ENCODE measurements at regions of chr1 and their contacts with region 1.

Region 1: DNA sequence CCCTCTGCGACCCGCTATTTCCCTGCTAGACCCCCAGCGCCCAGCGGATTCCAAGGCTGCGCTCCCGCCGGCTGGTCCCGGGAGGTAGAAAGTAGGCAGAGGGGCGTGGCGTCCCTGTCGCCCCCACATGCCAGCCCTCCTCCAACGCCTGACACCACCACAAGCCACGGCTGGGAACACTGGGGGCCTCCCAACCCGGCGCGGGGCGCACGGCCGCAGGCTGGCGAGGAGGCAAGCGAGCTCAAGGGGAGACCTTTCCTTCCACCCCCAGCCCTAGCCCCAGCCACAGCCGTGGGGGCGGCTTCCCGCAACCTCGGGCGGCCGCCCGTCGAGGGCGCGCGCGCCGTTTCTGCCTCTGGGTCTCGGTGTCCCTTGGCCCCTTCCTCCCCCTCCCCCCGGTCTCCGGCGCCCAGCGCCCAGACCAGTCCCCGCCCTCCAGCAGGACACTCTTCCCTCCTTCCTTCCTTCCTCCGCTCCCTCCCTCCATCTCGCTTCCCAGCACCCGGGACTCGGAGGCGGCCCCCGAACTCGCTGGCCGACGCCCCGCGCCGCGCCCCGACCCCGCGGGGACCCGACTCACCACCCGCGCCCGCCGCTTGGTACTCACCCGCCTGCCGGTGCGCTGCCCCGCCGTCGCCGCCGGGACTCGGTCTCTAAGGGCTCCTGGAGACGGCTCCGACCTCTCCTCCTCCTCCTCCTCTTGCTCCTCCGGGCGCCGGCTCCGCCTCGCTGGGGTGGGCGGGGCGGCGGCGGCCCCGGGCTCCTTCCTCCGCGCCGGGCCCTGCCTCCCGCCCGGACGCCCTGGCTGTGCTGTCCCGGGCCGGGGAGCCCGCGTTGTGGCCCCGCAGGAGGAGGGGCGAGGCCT is at the start of gene GNG12:
- DNase-seq: peak; percentile 14 to 81
- H3K4me3 ChIP-seq: peak within 1 kb of the TSS; percentile 70 to 85
- H3K27ac ChIP-seq: peak within 1 kb of the TSS; percentile 93 to 96
- H3K4me1 ChIP-seq: peaks cover 4 to 29% of the 10 kb centered on the region in 2 donors
- H3K27me3 ChIP-seq: no peaks in the 10 kb centered on the region
- CTCF ChIP-seq: no peak
- total RNA-seq, gene GNG12: 71.2 TPM

Region 2: DNA sequence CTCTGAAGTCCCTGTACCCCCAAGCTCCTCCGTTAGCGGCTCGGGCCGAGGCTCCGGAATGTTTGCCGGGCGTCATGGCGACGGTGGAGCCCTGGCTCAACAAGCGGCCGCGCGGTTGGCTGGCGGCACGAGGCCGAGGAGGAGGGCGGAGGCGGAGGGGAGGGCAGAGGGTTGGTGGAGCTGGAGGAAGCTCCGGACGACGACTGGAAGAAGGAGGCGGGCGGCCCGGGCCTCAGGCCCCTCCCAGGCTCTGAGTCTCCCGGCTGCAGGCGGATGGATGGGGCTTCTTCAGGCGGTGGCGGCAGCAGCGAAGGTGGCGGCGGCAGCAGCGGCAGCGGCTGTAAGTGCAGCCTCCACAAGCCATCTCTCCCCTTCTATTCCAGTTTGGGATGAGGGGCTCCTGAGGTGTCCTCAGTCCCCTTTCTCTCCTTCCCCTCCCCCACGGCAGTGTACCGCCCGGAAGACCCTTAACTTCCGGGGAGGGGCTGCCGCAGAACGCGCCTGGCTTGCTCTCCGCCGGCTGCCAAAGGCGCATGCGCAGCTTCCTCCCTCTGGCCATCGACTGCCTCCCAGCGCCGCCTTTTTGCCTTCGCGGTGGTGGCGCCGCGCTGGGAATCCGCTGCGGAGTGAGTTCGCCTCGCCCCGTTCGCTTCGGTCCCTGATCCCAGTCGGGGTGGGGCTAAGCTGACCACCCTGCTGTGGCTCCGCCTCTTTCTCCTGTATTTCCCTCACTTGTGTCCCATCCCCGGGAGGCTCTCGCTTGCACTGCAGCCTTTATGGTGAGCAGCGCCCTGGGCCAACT is 908.0 kb before region 1 on chr1 and contains the starts of genes DNAI4 and MIER1:
- intact Hi-C with region 1: loop called (anchors 10 kb)
- DNase-seq: peak; percentile 95 to 99
- H3K4me3 ChIP-seq: peak within 1 kb of the TSS; percentile 71 to 74
- H3K27ac ChIP-seq: peak within 1 kb of the TSS; percentile 85 to 95
- H3K4me1 ChIP-seq: peaks cover 10% of the 10 kb centered on the region in 2 donors
- H3K27me3 ChIP-seq: no peaks in the 10 kb centered on the region
- CTCF ChIP-seq: peak in 1 of 3 experiments; percentile 17
- total RNA-seq, gene DNAI4: not detected
- total RNA-seq, gene MIER1: 18.4 TPM

Region 3: DNA sequence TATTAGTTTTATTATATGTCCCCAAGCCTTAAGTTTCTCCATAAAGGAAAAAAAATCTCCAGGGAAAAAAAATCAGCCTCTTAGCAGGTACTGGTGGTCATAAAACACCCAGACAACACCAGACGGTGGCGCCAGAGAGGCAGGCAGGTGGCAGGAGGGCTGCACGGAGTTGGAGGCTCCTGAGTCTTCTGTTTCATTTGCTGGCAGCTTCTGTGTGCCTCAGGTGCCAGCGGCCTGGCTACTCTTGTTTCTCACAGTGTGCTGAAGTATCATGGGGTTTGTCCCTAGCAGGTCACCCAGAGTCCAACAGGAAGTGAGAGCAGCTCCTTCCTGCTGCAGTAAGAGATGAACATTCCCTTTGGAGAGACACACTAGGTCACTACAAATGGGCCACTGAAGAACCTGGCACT is 271.3 kb before region 1 on chr1:
- intact Hi-C with region 1: loop called (anchors 10 kb)
- DNase-seq: peak; percentile 66 to 96
- H3K4me3 ChIP-seq: no peak overlapping the region
- H3K27ac ChIP-seq: peak overlapping the region in 1 of 2 donors; percentile 30
- H3K4me1 ChIP-seq: peaks cover 2 to 12% of the 10 kb centered on the region in 2 donors
- H3K27me3 ChIP-seq: no peaks in the 10 kb centered on the region
- CTCF ChIP-seq: peak; percentile 85 to 92 (median 91)

Region 4: GRCh38 chr1:67791686-67792475 is 41.1 kb before region 1 on chr1:
- intact Hi-C with region 1: loop called (anchors 1 kb)
- DNase-seq: peak in 1 of 2 donors; percentile 77
- H3K4me3 ChIP-seq: no peak overlapping the region
- H3K27ac ChIP-seq: peak overlapping the region; percentile 77 to 80
- H3K4me1 ChIP-seq: peaks cover 20 to 78% of the 10 kb centered on the region in 2 donors
- H3K27me3 ChIP-seq: no peaks in the 10 kb centered on the region
- CTCF ChIP-seq: no peak

Region 5: DNA sequence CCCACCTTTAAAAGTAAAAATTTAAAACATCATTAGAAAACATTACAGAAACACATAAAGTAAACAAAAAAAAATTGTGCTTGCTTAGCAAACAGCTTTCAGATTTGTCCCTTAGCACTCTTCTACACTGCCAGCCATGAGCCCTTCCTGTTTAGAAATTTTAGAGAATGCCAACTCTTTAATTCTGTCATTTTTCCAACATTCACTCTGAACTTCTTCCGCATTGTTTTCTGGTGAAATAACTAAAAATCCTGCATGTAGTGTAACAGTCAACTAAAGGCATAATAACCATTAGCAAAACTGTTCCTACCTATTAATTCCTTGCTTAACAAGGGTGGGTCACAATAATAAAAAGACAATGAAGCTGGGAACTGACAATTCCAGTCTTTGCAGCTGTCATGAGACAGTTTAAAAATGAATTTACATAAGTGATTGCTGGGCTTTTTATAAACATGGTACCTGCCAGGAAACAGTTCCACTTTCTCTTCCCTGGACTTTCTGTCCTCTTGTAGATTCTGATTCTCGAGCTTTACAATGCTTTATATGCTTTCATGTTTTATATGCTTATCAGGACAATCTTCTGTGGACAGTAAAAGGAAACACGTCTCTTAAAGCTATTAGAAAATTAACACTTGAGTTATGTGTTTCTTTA is 18.7 kb before region 1 on chr1:
- intact Hi-C with region 1: loop called (anchors 2 kb)
- DNase-seq: no peak
- H3K4me3 ChIP-seq: peak overlapping the region in 1 of 2 donors; percentile 9
- H3K27ac ChIP-seq: peak overlapping the region; percentile 85 to 90
- H3K4me1 ChIP-seq: peaks cover 11 to 65% of the 10 kb centered on the region in 2 donors
- H3K27me3 ChIP-seq: no peaks in the 10 kb centered on the region
- CTCF ChIP-seq: no peak